Heart right ventricle (tissue), 16 donors: ENCODE measurements at regions of chr22 and their contacts with region 1.

Region 1: DNA sequence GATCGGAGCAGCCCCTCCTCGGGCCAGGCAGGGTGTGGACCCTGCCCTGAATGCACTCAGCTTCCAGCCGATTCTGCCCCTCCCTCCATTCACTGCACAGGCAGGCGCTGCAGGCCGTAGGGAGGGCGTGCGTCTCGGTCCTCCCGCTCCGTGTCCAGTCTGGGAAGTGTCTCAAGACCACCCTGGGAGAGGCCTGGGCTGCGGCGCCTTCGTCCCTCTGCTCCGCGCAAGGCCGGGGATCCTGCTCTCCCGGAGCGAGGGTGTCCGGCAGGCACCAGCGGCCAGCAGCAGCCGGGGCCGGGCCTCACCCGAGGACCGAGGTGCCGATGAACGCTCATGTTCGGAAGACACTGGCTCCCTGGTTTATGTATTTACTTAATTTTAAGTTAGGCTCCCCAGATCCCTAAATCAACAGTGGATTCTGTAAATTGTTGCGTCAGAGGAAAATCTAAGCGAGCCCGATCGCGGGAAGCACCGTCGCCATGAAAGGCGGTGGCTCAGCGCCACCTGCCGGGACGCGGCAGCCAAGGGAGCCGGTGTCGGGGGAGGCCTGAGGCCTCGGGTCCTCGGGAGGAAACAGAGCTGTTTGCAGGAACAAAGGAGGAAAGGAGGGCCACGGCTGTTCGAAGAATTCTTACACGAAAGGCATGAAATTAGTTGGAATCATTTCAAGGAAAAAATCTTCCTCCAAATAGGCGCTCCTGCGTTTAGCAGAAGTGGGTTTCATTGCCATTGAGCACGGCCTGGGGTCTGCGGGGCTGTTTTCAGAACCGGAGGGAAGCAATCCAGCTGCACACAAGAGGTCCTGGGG is 195.3 kb downstream of the BRD1 start:
- DNase-seq: peak; percentile 62 to 68
- ATAC-seq: peak; percentile 57 to 88 (median 83)
- H3K4me3 ChIP-seq: peak overlapping the region in 9 of 10 donors; percentile 25 to 57 (median 43)
- H3K27ac ChIP-seq: peak overlapping the region in 5 of 10 donors; percentile 3 to 48 (median 19)
- H3K4me1 ChIP-seq: peaks cover 4 to 14% (median 11%) of the 10 kb centered on the region in 9 donors
- H3K27me3 ChIP-seq: peaks cover 0 to 8% (median 0%) of the 10 kb centered on the region in 7 donors
- CTCF ChIP-seq: peak; percentile 60 to 93 (median 82)

Region 2: GRCh38 chr22:48574776-48575565 is 1057.4 kb before region 1 on chr22:
- intact Hi-C with region 1: loop called in 6 of 10 experiments (anchors 5 to 10 kb)
- DNase-seq: peak in 1 of 2 donors; percentile 19
- ATAC-seq: peak; percentile 40 to 77 (median 64)
- H3K4me3 ChIP-seq: no peak overlapping the region
- H3K27ac ChIP-seq: no peak overlapping the region
- H3K4me1 ChIP-seq: no peaks in the 10 kb centered on the region
- H3K27me3 ChIP-seq: peaks cover 0 to 59% (median 51%) of the 10 kb centered on the region in 7 donors
- CTCF ChIP-seq: peak in 6 of 9 donors; percentile 19 to 50 (median 38)

Region 3: DNA sequence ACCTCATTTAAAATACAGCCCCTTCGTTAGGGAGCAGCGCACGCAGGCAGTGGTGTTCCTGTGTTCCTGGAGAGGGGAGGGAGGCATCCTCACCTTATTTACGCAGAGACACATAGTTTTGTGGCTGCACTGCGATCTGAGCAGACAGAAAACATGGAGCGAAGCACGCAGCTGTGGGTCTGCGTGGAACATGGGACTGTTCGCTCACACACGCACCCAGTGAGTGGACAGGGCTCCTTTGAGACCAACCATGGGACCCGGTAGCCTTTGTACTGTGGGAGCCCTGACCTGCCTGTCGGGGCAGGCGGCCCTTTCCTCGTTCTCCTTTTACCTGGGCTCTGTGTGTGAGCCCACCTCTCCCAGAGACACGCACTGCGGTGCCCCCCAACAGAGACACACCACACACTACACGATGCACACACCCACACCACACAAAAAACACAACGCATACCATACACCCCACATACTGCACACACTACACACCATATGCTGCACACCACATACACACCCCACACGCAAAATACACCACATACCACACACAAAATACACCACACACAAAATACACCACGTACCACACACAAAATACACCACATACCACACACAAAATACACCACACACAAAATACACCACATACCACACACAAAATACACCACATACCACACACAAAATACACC is 1050.5 kb before region 1 on chr22:
- intact Hi-C with region 1: loop called in 6 of 10 experiments (anchors 5 to 10 kb)
- DNase-seq: no peak
- ATAC-seq: no peak
- H3K4me3 ChIP-seq: no peak overlapping the region
- H3K27ac ChIP-seq: no peak overlapping the region
- H3K4me1 ChIP-seq: no peaks in the 10 kb centered on the region
- H3K27me3 ChIP-seq: peaks cover 4 to 55% (median 39%) of the 10 kb centered on the region in 7 donors
- CTCF ChIP-seq: no peak

Region 4: DNA sequence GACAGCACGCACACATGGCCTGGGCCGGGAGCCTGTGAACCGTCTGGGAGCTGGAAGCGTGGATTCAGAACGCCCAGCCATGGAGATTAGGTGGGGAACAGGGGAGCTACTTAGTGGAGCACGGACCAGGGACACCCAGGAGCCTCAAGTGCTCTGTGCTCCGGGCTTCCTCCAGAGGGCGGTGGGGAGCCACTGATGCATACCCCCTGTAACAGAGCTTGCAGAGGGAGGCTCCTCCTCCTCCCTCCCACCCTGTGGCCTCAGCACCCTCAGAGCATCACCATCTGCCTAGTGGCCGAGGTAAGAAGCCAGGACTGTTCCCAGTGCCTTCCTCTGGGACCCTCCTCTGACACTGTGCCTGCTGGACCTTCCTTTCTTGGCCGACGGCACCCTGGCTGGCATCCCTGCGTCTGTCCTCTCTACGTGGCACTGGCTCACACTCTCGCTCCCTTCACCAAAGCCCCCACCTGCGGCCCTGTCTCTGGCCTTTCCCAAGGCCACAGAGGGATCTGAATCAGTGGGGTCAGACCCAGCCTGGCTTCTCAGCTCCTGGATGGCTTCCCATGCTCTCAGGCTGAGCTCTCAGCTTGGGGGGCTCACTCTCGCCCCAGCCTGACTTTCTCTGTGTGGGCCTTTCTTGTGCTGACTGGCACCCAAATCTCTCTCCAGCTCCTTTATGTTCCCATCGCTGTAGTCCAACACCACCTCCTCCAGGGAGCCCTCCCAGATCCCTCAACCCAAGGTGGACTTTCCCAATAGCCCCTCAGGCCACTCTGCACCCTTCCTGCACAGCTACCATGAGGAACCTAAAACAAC is 585.6 kb before region 1 on chr22:
- intact Hi-C with region 1: loop called in 1 of 10 experiments (anchors 10 kb)
- DNase-seq: peak; percentile 24 to 42
- ATAC-seq: peak in 7 of 8 donors; percentile 47 to 75 (median 70)
- H3K4me3 ChIP-seq: no peak overlapping the region
- H3K27ac ChIP-seq: no peak overlapping the region
- H3K4me1 ChIP-seq: no peaks in the 10 kb centered on the region
- H3K27me3 ChIP-seq: peaks cover 0 to 70% (median 29%) of the 10 kb centered on the region in 7 donors
- CTCF ChIP-seq: peak; percentile 10 to 58 (median 48)

Region 5: GRCh38 chr22:49724893-49725474 is 92.6 kb after region 1 on chr22:
- intact Hi-C with region 1: loop called in 1 of 10 experiments (anchors 10 kb)
- DNase-seq: peak; percentile 61 to 69
- ATAC-seq: peak; percentile 81 to 93 (median 91)
- H3K4me3 ChIP-seq: peak overlapping the region; percentile 10 to 52 (median 42)
- H3K27ac ChIP-seq: no peak overlapping the region
- H3K4me1 ChIP-seq: peaks cover 0 to 14% (median 5%) of the 10 kb centered on the region in 9 donors
- H3K27me3 ChIP-seq: peaks cover 7 to 74% (median 65%) of the 10 kb centered on the region in 7 donors
- CTCF ChIP-seq: peak; percentile 60 to 81 (median 77)